ENCODE measurements at regions of chr5 and their contacts with region 1.

Region 1: DNA sequence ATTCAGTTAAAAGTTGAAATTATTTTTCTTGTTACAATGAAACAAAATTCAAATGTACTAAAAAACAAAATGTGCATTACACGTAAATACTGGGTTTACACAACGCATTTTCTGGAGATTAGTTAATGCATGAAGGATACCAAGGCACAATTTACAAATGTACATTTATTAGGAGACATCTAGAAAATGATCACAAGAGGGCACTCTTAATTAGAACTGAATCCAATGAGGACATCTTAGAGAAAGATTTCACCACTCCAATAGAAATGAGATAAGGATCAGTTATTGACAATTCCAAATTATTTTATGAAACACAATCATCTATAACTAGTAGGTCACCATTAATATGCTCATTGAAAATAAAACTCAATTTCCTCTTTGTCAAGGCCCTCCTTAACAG is 36.6 kb upstream of the CDH12 start:
- DNase-seq: peak; percentile 46
- H3K4me3 Mint-ChIP-seq: no peak overlapping the region
- H3K27ac Mint-ChIP-seq: peak overlapping the region; percentile 92
- H3K4me1 Mint-ChIP-seq: peaks cover 39% of the 10 kb centered on the region
- H3K27me3 Mint-ChIP-seq: no peaks in the 10 kb centered on the region
- CTCF ChIP-seq: peak; percentile 31

Region 2: DNA sequence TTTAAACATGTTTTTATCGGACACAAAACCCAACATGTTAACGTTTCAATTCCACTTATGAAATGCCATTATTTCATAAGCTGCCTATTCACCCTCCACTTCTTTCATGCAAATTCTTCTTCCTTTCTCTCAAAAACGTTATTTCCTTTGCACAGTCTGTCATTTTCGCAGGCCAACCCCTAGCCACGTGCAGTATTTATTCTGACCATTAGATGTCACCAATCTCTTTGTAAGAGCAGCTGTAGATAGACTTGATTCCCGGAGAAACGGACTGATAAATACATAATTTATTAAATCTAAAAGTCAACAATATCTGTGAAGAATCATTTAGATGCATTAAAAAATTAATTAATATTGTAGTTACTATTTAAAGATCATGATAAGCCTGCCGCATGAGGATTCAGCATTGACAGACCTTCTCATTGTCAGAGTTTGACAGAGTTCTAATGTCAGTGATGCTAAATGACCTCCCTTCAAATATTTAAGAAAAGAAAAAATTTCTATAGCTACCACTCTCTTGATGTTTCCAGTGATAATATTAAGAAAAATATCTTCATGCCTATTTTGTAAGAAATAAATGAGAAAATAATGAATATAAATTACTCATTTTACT is 970.2 kb before region 1 on chr5:
- CTCF ChIA-PET with region 1: no interaction called
- POLR2A ChIA-PET with region 1: no interaction called
- intact Hi-C with region 1: loop called (anchors 1 kb)
- DNase-seq: peak; percentile 59
- H3K4me3 Mint-ChIP-seq: no peak overlapping the region
- H3K27ac Mint-ChIP-seq: no peak overlapping the region
- H3K4me1 Mint-ChIP-seq: peaks cover 6% of the 10 kb centered on the region
- H3K27me3 Mint-ChIP-seq: no peaks in the 10 kb centered on the region
- CTCF ChIP-seq: peak; percentile 65

Region 3: DNA sequence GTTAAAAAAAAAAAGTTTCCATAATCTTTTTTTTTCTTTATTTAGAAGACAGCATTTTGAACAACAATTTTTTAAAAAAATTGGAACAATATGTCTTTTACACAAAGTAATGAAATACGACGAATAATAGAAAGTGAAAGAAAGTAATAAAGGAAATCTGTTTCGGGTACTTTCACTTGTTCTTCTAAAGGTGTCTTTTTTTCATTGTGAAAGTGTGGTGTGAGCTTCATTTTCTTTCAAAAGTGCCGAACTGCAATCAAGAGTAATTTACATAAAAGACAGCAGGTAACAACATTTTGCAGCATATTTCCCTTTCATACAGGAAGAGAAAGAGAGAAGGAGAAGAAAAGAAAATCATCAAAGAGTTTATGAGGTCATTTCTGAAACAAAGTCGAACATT is 123.1 kb after region 1 on chr5:
- CTCF ChIA-PET with region 1: interaction called, 3 read pairs
- POLR2A ChIA-PET with region 1: interaction called, 5 read pairs
- intact Hi-C with region 1: loop called (anchors 10 kb)
- DNase-seq: peak; percentile 22
- H3K4me3 Mint-ChIP-seq: peak overlapping the region; percentile 78
- H3K27ac Mint-ChIP-seq: peak overlapping the region; percentile 95
- H3K4me1 Mint-ChIP-seq: peaks cover 9% of the 10 kb centered on the region
- H3K27me3 Mint-ChIP-seq: no peaks in the 10 kb centered on the region
- CTCF ChIP-seq: no peak

Region 4: GRCh38 chr5:23139338-23140171 is 249.8 kb after region 1 on chr5:
- CTCF ChIA-PET with region 1: interaction called, 3 read pairs
- POLR2A ChIA-PET with region 1: no interaction called
- intact Hi-C with region 1: loop called (anchors 1 kb)
- DNase-seq: peak; percentile 59
- H3K4me3 Mint-ChIP-seq: no peak overlapping the region
- H3K27ac Mint-ChIP-seq: peak overlapping the region; percentile 71
- H3K4me1 Mint-ChIP-seq: peaks cover 9% of the 10 kb centered on the region
- H3K27me3 Mint-ChIP-seq: no peaks in the 10 kb centered on the region
- CTCF ChIP-seq: peak; percentile 54

Region 5: GRCh38 chr5:23157169-23157568 is 267.5 kb after region 1 on chr5:
- CTCF ChIA-PET with region 1: no interaction called
- POLR2A ChIA-PET with region 1: no interaction called
- intact Hi-C with region 1: no loop called
- DNase-seq: no peak
- H3K4me3 Mint-ChIP-seq: no peak overlapping the region
- H3K27ac Mint-ChIP-seq: no peak overlapping the region
- H3K4me1 Mint-ChIP-seq: no peaks in the 10 kb centered on the region
- H3K27me3 Mint-ChIP-seq: no peaks in the 10 kb centered on the region
- CTCF ChIP-seq: no peak